ENCODE measurements at regions of chr12 and their contacts with region 1.

Region 1: DNA sequence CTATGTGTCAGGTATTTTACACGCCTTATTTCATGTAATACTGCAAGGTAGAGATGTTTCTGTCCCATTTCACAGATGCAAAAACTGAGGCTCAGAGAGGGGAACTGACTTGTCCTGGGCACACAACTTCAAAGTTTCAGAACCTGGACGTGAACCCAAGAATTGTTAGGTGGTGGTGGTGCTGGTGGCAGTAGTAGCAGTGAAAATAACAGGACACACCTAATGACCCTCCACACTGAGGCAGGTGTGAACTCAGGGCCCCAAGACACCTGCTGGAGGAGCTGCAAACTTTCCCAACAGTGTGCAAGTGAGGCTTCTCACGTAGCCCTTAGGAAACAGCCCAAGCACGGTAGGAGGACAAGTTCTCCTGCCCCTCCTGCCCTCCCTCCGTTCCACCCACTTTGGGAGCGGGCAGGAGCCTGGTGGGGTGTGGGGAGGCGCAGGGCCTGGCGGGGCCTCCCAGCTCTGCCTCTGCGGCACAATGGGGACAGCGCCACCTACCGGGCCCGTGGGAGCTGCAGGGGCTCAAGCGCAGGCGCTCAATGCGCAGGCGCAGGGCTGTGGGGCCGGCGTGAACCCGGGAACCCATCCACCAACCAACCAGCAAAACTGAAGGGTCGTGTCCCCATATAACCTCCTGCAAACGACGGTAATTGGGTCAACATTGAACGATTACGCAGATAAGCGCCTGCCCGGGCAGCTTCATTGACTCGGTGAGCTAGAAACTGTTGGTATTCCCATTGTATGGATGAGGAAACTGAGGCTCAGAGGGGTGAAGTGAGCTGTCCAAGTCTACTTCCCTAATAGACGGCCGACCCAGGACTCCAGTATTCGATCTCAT is 12.0 kb upstream of the TRPV4 start:
- DNase-seq: peak; percentile 96
- CTCF ChIP-seq: peak; percentile 99

Region 2: GRCh38 chr12:109597795-109598427 is 247.3 kb before region 1 on chr12:
- CTCF ChIA-PET with region 1: interaction called, 22 read pairs
- POLR2A ChIA-PET with region 1: no interaction called
- DNase-seq: peak; percentile 88
- CTCF ChIP-seq: peak; percentile 95

Region 3: DNA sequence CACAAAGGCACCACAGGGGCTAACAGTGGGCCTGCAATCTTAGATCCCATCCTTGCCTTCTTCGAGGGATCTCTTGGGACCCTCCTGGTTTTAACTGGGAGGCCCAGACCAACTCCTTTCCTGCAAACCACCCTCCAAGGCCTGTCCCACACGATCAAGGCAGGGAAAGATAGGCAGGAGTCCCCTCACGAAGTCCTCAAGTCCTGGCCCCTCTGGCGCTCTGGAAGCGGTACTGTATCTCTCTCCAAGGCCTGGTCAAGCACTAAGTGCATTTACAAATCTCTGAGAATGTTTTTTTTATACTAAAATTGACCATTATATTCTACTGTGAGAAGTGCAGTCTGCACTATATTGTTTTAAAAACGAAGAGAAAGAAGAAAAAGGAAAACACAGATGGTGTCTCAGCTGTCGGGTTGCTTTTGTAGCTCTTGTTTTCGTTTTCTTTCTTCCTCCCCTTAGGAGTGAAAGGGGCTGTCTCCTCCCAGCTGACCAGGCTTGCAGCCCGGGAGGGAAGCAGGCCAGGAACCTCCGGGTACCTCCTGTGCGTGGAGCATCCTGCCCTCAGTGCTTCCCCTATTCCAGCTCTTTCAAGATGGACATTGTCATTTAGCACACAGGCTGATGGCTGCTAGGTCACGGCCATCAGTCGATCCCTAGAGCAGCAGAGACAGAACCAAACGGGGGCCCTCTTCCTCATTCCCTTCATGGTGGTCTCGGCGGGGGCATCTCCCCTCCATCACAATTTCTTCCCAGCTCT is 74.9 kb before region 1 on chr12:
- CTCF ChIA-PET with region 1: no interaction called
- POLR2A ChIA-PET with region 1: no interaction called
- DNase-seq: no peak
- CTCF ChIP-seq: no peak

Region 4: DNA sequence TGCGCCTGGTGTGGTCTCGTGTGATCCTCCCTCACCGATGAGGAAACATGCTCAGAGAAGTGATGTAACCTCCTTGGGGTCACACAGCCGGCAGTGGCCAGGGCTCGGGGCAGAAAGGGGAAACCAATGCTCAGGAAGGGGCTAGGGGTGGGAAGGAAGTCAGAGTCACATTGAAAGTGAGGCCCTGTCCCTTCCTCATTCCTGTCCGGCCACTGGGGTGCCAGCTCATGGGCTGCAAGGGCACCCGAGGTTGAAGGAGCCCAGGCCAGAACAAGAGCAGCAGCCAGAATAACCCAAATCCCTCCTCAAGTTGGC is 17.0 kb before region 1 on chr12:
- CTCF ChIA-PET with region 1: interaction called, 25 read pairs
- POLR2A ChIA-PET with region 1: no interaction called
- DNase-seq: no peak
- CTCF ChIP-seq: no peak

Region 5: DNA sequence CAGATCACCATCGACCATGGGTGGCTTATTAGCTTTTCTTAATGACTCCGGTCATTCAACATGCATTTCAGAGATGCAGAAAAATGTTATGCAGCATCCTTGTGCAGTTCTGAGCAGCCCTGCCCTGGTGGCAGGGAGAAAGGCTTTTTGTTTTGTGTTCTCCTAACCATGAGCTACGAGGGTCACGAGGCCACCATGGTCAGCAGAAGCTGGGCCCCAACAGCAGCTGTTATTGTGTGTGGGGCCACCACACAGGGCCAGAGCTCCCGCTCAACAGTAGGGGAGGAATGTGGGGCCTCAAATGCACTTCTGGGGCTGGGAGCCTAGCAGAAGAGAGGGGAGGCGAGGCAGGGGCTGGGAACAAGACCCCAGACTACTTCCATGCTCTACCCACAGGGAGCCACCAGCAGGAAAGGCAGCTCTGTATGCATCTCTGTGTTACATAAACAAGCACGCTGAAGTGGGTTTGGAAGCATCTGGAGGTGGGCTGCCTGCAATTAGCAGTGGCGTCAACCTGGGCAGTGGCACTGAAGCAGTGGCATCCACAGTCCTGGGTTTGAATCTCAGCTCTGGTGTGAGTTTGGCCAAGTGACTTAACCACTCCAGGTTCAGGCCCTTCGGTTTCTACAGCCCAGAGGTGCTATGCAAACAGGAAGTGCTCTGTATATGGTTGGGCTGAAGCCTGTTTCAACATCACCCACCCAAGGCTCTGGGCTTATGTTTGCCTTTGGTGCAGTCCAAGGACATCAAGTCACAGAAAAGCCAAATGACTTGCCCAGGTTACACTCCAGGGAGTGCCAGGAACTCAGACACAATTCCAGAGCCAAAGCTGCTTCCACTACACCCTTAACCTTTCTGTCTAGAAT is 18.9 kb after region 1 on chr12:
- CTCF ChIA-PET with region 1: interaction called, 85 read pairs
- POLR2A ChIA-PET with region 1: no interaction called
- DNase-seq: no peak
- CTCF ChIP-seq: no peak